Activated B cell treated with CpG ODN at 0.5 μM for 24 hours (primary cell): ENCODE measurements at regions of chr11 and their contacts with region 1.

Region 1: DNA sequence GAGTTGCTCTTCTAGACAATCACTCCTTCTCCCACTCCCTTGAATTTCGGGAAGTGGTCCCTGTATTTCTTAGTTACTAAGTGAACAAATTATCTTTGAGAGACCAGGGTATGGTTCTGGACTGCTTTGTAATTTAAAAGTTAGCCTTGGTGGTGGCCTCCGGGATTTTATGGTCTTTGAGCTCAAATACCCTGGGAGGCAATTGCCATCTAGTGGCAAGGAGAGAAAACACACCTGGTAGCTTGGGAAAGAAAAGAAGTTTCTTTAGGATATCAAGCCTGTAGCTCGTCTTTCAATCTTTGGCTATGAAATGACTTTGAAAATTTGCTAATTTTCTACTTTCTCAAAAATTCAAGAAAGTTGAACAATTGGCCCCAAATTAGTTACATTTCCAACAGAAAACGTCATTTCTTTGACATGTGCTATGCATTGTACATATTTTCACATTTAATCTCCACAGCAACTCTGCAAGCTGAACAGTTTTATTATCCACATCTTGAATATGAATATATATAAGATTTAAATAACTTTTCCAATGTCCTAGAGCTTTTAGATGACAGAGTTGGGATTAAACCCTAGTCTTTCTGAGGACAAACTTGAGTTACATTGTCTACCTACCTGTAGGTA is 39.1 kb downstream of the MMP27 start:
- DNase-seq: no peak
- ATAC-seq: peak; percentile 54
- H3K4me3 Mint-ChIP-seq: no peak overlapping the region
- H3K27ac Mint-ChIP-seq: no peak overlapping the region
- H3K4me1 Mint-ChIP-seq: peaks cover 3% of the 10 kb centered on the region
- H3K27me3 Mint-ChIP-seq: no peaks in the 10 kb centered on the region
- CTCF ChIP-seq: no peak

Region 2: DNA sequence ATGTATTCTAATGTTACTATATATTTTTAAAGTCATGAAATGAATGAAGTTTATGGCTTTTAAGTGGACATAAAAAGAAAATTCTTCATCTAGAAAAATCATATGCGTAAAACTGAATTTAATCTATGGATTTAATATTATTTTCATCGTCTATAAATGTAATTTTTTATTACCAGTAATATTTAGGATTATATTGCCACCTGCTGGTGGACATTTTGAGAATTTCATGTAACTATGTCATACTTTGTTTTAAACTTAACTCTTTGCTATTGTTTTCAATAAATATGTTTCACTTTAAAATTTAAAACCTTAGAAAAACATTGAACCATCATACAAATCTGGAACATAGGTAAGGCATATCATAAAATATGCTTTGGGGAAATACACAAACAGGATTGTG is 818.2 kb before region 1 on chr11:
- CTCF ChIA-PET with region 1: no interaction called
- POLR2A ChIA-PET with region 1: no interaction called
- intact Hi-C with region 1: loop called (anchors 2 kb)
- DNase-seq: no peak
- ATAC-seq: no peak
- H3K4me3 Mint-ChIP-seq: no peak overlapping the region
- H3K27ac Mint-ChIP-seq: no peak overlapping the region
- H3K4me1 Mint-ChIP-seq: no peaks in the 10 kb centered on the region
- H3K27me3 Mint-ChIP-seq: peaks cover 4% of the 10 kb centered on the region
- CTCF ChIP-seq: no peak

Region 3: DNA sequence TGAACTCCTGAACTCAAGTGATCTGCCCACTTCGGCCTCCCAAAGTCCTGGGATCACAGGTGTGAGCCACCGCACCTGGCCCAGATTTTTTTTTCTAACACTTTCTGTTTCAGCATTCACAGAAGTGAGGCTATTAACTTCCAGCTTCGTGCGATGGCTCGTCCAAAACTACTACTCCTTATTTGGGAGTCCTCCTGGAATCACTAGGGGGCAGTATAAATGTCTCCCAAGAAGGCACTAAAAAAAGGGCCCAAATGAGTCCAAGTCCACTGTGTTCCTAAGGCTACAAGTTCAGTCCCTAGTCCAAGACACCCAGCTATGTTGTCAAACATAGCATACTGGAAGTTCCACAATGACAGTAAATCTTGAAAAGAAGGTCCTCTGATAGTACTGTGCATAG is 412.4 kb before region 1 on chr11:
- CTCF ChIA-PET with region 1: interaction called, 3 read pairs
- POLR2A ChIA-PET with region 1: no interaction called
- intact Hi-C with region 1: loop called (anchors 1 kb)
- DNase-seq: no peak
- ATAC-seq: no peak
- H3K4me3 Mint-ChIP-seq: no peak overlapping the region
- H3K27ac Mint-ChIP-seq: no peak overlapping the region
- H3K4me1 Mint-ChIP-seq: no peaks in the 10 kb centered on the region
- H3K27me3 Mint-ChIP-seq: peaks cover under 1% of the 10 kb centered on the region
- CTCF ChIP-seq: no peak

Region 4: GRCh38 chr11:102287964-102288724 is 378.3 kb before region 1 on chr11:
- CTCF ChIA-PET with region 1: interaction called, 30 read pairs
- POLR2A ChIA-PET with region 1: interaction called, 4 read pairs
- intact Hi-C with region 1: loop called (anchors 1 kb)
- DNase-seq: no peak
- ATAC-seq: peak; percentile 84
- H3K4me3 Mint-ChIP-seq: peak overlapping the region; percentile 74
- H3K27ac Mint-ChIP-seq: peak overlapping the region; percentile 57
- H3K4me1 Mint-ChIP-seq: peaks cover 37% of the 10 kb centered on the region
- H3K27me3 Mint-ChIP-seq: no peaks in the 10 kb centered on the region
- CTCF ChIP-seq: no peak

Region 5: DNA sequence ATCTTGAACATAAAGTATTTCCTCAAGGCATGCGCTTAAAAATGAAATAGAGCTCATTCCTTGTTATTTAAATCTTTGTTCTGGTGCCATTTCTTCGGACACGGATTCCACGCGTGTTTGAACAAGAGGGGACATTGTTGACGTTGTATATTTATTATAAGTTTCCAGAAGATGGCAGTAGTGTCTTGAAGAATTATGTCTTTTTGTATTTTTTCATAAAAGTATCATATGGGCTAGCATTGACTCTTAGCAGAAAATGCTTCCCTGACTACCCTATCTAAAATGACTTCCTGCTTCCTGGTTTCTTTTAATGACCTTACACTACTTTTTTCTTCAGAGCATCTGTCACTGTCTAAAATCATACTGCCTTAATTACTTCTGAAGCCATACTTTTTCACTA is 299.1 kb before region 1 on chr11:
- CTCF ChIA-PET with region 1: interaction called, 5 read pairs
- POLR2A ChIA-PET with region 1: interaction called, 3 read pairs
- intact Hi-C with region 1: loop called (anchors 1 kb)
- DNase-seq: no peak
- ATAC-seq: no peak
- H3K4me3 Mint-ChIP-seq: no peak overlapping the region
- H3K27ac Mint-ChIP-seq: peak overlapping the region; percentile 21
- H3K4me1 Mint-ChIP-seq: peaks cover 14% of the 10 kb centered on the region
- H3K27me3 Mint-ChIP-seq: no peaks in the 10 kb centered on the region
- CTCF ChIP-seq: no peak

Region 6: DNA sequence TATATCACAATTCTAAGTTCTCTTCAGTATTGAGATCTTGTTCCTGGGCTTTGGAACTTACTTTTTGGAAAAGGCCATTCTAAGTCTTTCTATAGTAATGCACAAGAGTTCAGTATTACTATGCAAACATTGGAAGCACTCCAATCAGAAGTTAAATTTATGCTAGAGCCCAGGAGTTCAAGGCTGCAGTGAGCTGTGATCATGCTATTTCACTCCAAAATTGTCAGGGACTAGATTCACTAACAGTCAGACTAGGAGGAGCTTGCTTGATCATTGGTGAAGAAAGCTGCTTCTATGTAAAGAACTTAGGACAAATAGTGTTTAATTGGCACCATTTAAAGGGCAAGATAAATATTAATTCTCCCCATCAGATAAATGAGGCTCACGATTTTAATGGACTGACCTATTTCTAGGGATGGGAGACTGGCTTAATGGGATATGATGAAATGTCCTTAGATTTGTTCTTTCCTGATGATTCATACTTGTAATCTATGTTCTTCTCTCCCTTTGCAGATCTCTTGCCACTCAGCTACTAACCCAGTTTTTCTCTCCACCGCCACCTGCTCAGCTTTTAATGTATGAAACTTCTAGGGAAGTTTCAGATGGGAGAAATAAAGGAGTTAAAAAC is 181.2 kb before region 1 on chr11:
- CTCF ChIA-PET with region 1: no interaction called
- POLR2A ChIA-PET with region 1: no interaction called
- intact Hi-C with region 1: no loop called
- DNase-seq: no peak
- ATAC-seq: no peak
- H3K4me3 Mint-ChIP-seq: no peak overlapping the region
- H3K27ac Mint-ChIP-seq: no peak overlapping the region
- H3K4me1 Mint-ChIP-seq: peaks cover 5% of the 10 kb centered on the region
- H3K27me3 Mint-ChIP-seq: no peaks in the 10 kb centered on the region
- CTCF ChIP-seq: no peak

Region 7: DNA sequence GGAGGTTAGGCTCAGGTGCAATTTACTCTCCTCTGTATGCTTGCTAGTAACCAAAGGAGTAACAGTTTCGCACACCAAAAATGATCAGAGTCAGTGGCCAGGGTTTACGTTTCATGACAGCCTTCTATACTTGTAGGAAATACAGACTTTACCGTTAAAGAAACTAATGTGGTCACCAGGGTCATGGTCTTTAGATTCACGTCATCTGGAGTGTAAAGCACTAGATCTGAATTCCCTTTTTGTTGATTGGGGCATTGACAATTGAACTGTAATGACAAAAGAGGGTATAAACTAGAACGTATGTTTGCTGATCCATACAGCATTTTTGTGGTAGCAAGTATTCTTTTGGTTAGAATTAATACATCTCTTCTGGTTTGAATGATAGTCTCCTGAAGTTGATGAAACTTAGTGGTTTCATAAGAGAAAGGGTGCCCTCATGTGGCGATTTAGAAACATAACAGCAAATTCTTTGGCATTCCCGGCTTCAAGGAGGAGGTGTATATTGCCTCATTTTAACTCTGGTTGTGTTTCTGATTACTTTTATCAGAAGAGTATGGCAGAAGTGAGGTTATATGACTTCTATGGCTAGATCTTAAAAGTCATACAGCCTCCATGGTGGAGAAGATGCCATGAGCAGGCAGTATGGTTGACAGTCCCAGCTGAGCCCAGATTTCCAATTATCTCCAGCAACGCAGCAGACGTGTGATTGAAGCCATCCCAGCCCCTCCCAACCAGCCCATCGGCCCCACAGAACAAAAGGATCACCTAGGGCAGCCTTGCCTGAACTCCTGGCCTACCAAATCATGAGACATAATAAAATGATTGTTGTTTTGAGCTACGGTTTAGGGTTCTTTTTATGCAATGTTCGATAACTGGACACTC is 171.0 kb before region 1 on chr11:
- CTCF ChIA-PET with region 1: interaction called, 10 read pairs
- POLR2A ChIA-PET with region 1: no interaction called
- intact Hi-C with region 1: loop called (anchors 1 kb)
- DNase-seq: no peak
- ATAC-seq: peak; percentile 77
- H3K4me3 Mint-ChIP-seq: no peak overlapping the region
- H3K27ac Mint-ChIP-seq: peak overlapping the region; percentile 53
- H3K4me1 Mint-ChIP-seq: peaks cover 17% of the 10 kb centered on the region
- H3K27me3 Mint-ChIP-seq: no peaks in the 10 kb centered on the region
- CTCF ChIP-seq: no peak

Region 8: DNA sequence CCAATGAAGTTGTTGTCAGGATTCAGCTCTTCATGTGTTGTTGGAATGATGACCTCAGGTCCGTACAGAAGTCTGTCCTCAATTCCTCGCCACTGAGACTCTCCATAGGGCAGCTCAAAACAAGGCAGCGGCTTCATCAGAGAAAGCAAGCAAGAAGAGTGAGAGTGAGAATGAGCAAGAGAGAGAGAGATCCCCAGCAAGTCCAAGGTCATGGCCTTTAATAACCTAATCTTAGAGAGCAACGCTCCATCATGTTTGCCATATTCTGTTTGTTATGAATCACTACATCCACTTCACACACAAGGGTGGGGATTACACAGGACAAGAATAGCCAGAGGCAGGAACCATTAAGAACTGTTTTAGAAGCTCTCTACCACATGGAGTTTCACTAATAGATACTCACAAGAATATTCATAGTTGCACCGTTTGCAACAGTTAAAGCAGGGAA is 112.6 kb before region 1 on chr11:
- CTCF ChIA-PET with region 1: no interaction called
- POLR2A ChIA-PET with region 1: no interaction called
- intact Hi-C with region 1: no loop called
- DNase-seq: no peak
- ATAC-seq: no peak
- H3K4me3 Mint-ChIP-seq: no peak overlapping the region
- H3K27ac Mint-ChIP-seq: no peak overlapping the region
- H3K4me1 Mint-ChIP-seq: peaks cover 32% of the 10 kb centered on the region
- H3K27me3 Mint-ChIP-seq: no peaks in the 10 kb centered on the region
- CTCF ChIP-seq: no peak